CD8-positive, alpha-beta T cell (primary cell): ENCODE measurements at regions of chr21 and their contacts with region 1.

Region 1: GRCh38 chr21:28099001-28099705 is 893.5 kb downstream of the LTN1 start:
- DNase-seq: no peak
- ATAC-seq: no peak
- H3K4me3 ChIP-seq: no peak overlapping the region
- H3K4me3 Mint-ChIP-seq: no peak overlapping the region
- H3K27ac ChIP-seq: no peak overlapping the region
- H3K27ac Mint-ChIP-seq: no peak overlapping the region
- H3K4me1 ChIP-seq: no peaks in the 10 kb centered on the region
- H3K4me1 Mint-ChIP-seq: no peaks in the 10 kb centered on the region
- H3K27me3 ChIP-seq: no peaks in the 10 kb centered on the region
- H3K27me3 Mint-ChIP-seq: no peaks in the 10 kb centered on the region
- CTCF ChIP-seq: no peak

Region 2: DNA sequence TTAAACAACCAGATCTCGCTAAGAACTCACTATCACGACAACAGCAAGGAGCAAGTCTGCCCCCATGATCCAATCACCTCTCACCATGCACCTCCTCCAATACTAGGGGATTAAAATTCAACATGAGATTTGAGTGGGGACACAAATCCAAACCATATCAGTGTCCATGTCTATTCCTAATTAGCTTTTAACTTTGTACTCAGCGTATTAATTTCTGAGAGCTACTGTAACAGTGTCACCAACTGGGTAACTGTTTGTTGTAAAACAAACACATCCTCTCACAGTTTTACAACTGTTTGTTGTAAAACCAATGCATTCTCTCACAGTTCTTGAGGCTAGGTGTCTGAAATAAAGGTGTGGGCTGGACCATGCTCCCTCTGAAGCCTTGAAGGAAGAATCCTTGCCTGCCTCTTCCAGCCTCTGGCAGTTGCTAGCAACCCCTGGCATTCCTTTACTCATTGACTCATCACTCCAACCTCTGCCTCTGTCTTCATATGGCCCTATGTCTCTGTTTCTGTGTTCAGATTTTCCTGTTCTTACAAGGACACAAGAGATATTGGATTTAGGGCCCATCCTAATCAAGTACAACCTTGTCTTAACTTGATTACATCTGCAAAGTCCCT is 772.3 kb after region 1 on chr21:
- CTCF ChIA-PET with region 1: no interaction called
- POLR2A ChIA-PET with region 1: no interaction called
- intact Hi-C with region 1: no loop called
- DNase-seq: no peak
- ATAC-seq: no peak
- H3K4me3 ChIP-seq: no peak overlapping the region
- H3K4me3 Mint-ChIP-seq: no peak overlapping the region
- H3K27ac ChIP-seq: no peak overlapping the region
- H3K27ac Mint-ChIP-seq: peak overlapping the region; percentile 15
- H3K4me1 ChIP-seq: no peaks in the 10 kb centered on the region
- H3K4me1 Mint-ChIP-seq: no peaks in the 10 kb centered on the region
- H3K27me3 ChIP-seq: no peaks in the 10 kb centered on the region
- H3K27me3 Mint-ChIP-seq: no peaks in the 10 kb centered on the region
- CTCF ChIP-seq: no peak

Region 3: GRCh38 chr21:29149771-29150425 is 1050.7 kb after region 1 on chr21:
- CTCF ChIA-PET with region 1: no interaction called
- POLR2A ChIA-PET with region 1: no interaction called
- intact Hi-C with region 1: loop called in 1 of 2 experiments (anchors 5 kb)
- DNase-seq: no peak
- ATAC-seq: no peak
- H3K4me3 ChIP-seq: no peak overlapping the region
- H3K4me3 Mint-ChIP-seq: no peak overlapping the region
- H3K27ac ChIP-seq: no peak overlapping the region
- H3K27ac Mint-ChIP-seq: no peak overlapping the region
- H3K4me1 ChIP-seq: no peaks in the 10 kb centered on the region
- H3K4me1 Mint-ChIP-seq: peaks cover 8% of the 10 kb centered on the region
- H3K27me3 ChIP-seq: no peaks in the 10 kb centered on the region
- H3K27me3 Mint-ChIP-seq: no peaks in the 10 kb centered on the region
- CTCF ChIP-seq: no peak